ENCODE measurements at regions of chr9 and their contacts with region 1.

Region 1: GRCh38 chr9:1050116-1050800 is at the start of gene DMRT2:
- DNase-seq: peak; percentile 17
- H3K4me3 Mint-ChIP-seq: peak within 1 kb of the TSS; percentile 59
- H3K27ac Mint-ChIP-seq: peak within 1 kb of the TSS; percentile 79
- H3K4me1 Mint-ChIP-seq: peaks cover 27% of the 10 kb centered on the region
- H3K27me3 Mint-ChIP-seq: peaks cover 87% of the 10 kb centered on the region
- total RNA-seq, gene DMRT2: 1.2 and 1.5 TPM in 2 replicates

Region 2: GRCh38 chr9:841371-842209 is 208.7 kb before region 1 on chr9 and contains the start of gene DMRT1:
- intact Hi-C with region 1: loop called (anchors 2 kb)
- DNase-seq: no peak
- H3K4me3 Mint-ChIP-seq: no peak within 1 kb of the TSS
- H3K27ac Mint-ChIP-seq: no peak within 1 kb of the TSS
- H3K4me1 Mint-ChIP-seq: peaks cover 3% of the 10 kb centered on the region
- H3K27me3 Mint-ChIP-seq: peaks cover 41% of the 10 kb centered on the region
- total RNA-seq, gene DMRT1: not detected in 2 replicates

Region 3: DNA sequence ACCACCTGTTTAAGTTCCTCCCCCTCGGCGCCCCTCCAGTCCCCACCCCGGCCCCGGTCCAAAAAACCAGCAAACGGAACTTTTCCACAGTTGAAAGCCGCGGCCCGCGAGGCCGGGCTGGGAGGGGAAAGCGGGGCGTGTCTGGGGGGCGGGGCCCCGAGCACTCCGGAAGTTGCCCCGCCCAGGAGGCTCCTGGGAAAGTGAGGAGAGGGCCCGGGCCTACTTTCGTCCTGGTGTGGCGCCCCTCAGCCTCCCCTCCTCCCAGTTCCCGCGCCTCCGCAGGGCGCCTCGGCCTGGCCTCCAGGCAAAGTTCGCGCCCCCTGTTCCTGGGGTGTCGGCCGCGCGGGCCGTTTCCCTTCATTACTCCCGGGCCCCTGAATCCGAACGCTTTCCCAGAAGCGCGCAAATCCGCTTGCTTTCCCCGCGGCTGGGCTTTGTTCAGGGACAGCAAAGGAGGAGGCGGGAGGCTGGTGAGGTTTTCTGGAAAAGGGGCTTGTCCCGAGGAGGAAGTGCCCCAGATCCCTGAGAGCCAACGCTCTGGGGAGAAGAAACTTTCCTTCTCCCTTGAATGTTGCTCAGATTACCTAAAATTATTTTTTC is 78.3 kb before region 1 on chr9:
- intact Hi-C with region 1: loop called (anchors 1 kb)
- DNase-seq: no peak
- H3K4me3 Mint-ChIP-seq: no peak overlapping the region
- H3K27ac Mint-ChIP-seq: peak overlapping the region; percentile 48
- H3K4me1 Mint-ChIP-seq: peaks cover 21% of the 10 kb centered on the region
- H3K27me3 Mint-ChIP-seq: peaks cover 77% of the 10 kb centered on the region

Region 4: DNA sequence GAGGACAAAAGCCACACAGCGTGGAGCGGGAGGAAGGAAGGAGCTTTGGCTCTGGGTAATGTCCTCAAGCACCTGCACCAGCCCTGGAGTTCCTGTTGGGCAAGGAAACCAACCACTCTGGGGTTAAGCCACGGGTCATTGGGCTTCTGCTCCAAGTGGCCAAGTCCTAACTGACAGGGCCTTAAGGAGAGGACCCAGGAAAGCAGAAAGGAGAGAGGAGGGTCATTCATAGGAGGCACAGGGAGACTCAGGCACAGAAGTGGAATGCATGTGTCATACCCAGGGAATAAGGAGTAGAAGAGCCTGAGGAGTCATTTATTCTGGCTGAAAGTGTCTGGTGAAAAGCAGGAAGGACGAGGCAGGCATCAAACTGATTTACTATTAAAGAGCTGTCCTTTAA is 129.1 kb after region 1 on chr9:
- intact Hi-C with region 1: no loop called
- DNase-seq: no peak
- H3K4me3 Mint-ChIP-seq: no peak overlapping the region
- H3K27ac Mint-ChIP-seq: no peak overlapping the region
- H3K4me1 Mint-ChIP-seq: no peaks in the 10 kb centered on the region
- H3K27me3 Mint-ChIP-seq: no peaks in the 10 kb centered on the region

Region 5: GRCh38 chr9:1400983-1401382 is 350.7 kb after region 1 on chr9:
- intact Hi-C with region 1: loop called (anchors 5 kb)
- DNase-seq: peak; percentile 1
- H3K4me3 Mint-ChIP-seq: no peak overlapping the region
- H3K27ac Mint-ChIP-seq: no peak overlapping the region
- H3K4me1 Mint-ChIP-seq: no peaks in the 10 kb centered on the region
- H3K27me3 Mint-ChIP-seq: peaks cover 2% of the 10 kb centered on the region